ENCODE measurements at regions of chr19 and their contacts with region 1.

Region 1: DNA sequence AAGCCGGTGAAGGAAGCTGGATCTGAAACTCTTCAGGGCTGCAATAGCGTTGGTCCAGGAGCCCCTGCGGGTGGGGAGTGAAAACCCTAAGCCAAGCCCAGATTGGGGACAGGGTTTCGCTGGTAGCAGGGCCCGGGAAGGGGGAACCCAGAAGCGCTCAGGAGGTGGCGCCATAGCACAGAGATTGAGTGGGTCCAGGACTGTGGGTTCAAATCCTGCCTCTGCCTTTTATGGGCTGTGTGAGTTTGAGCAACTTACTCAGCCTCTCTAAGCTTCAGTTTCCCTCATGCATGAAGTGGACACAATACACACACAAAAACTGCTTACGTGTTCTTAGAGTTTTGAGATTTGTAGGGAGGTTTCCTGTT is 8.3 kb upstream of the SYCN start:
- DNase-seq: peak in 8 of 9 donors; percentile 24 to 58 (median 46)
- ATAC-seq: peak; percentile 80
- H3K4me3 ChIP-seq: no peak overlapping the region
- H3K4me3 Mint-ChIP-seq: no peak overlapping the region
- H3K27ac ChIP-seq: no peak overlapping the region
- H3K27ac Mint-ChIP-seq: no peak overlapping the region
- H3K4me1 ChIP-seq: no peaks in the 10 kb centered on the region
- H3K4me1 Mint-ChIP-seq: no peaks in the 10 kb centered on the region
- H3K27me3 ChIP-seq: no peaks in the 10 kb centered on the region
- H3K27me3 Mint-ChIP-seq: peaks cover 0 to 13% (median 5%) of the 10 kb centered on the region in 5 donors

Region 2: GRCh38 chr19:38891771-38892170 is 320.6 kb before region 1 on chr19:
- CTCF ChIA-PET with region 1: no interaction called
- POLR2A ChIA-PET with region 1: no interaction called
- intact Hi-C with region 1: no loop called
- DNase-seq: no peak
- ATAC-seq: no peak
- H3K4me3 ChIP-seq: no peak overlapping the region
- H3K4me3 Mint-ChIP-seq: no peak overlapping the region
- H3K27ac ChIP-seq: no peak overlapping the region
- H3K27ac Mint-ChIP-seq: no peak overlapping the region
- H3K4me1 ChIP-seq: peaks cover 0 to 3% of the 10 kb centered on the region in 2 donors
- H3K4me1 Mint-ChIP-seq: peaks cover 0 to 17% (median 8%) of the 10 kb centered on the region in 7 donors
- H3K27me3 ChIP-seq: no peaks in the 10 kb centered on the region
- H3K27me3 Mint-ChIP-seq: no peaks in the 10 kb centered on the region

Region 3: GRCh38 chr19:39166571-39167391 is 45.6 kb before region 1 on chr19:
- CTCF ChIA-PET with region 1: no interaction called
- POLR2A ChIA-PET with region 1: no interaction called
- intact Hi-C with region 1: no loop called
- DNase-seq: no peak
- ATAC-seq: no peak
- H3K4me3 ChIP-seq: no peak overlapping the region
- H3K4me3 Mint-ChIP-seq: no peak overlapping the region
- H3K27ac ChIP-seq: no peak overlapping the region
- H3K27ac Mint-ChIP-seq: no peak overlapping the region
- H3K4me1 ChIP-seq: no peaks in the 10 kb centered on the region
- H3K4me1 Mint-ChIP-seq: peaks cover 0 to 15% (median 0%) of the 10 kb centered on the region in 7 donors
- H3K27me3 ChIP-seq: no peaks in the 10 kb centered on the region
- H3K27me3 Mint-ChIP-seq: no peaks in the 10 kb centered on the region

Region 4: DNA sequence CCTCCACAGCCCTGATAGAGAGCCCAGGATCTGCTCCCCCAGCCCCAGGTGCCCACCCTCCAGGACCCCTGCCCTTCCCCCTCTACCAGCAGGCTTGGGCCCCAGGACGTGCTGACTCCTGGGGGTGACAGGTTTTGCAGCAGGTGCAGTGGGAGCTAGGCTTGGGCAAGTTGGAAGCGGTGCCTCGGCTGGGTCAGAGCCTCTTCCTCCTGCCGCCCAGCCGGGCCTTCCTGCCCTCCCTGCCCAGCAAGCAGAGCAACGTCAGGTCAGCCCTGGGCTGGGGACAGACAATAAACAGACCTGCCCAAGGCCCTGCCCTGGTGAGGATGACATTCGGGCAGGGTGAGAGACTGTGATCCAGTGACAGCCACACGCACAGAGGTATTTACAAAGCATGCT is 24.8 kb before region 1 on chr19:
- CTCF ChIA-PET with region 1: no interaction called
- POLR2A ChIA-PET with region 1: no interaction called
- intact Hi-C with region 1: no loop called
- DNase-seq: no peak
- ATAC-seq: no peak
- H3K4me3 ChIP-seq: no peak overlapping the region
- H3K4me3 Mint-ChIP-seq: no peak overlapping the region
- H3K27ac ChIP-seq: no peak overlapping the region
- H3K27ac Mint-ChIP-seq: peak overlapping the region in 2 of 9 donors; percentile 7 to 42
- H3K4me1 ChIP-seq: no peaks in the 10 kb centered on the region
- H3K4me1 Mint-ChIP-seq: peaks cover 0 to 4% (median 0%) of the 10 kb centered on the region in 7 donors
- H3K27me3 ChIP-seq: no peaks in the 10 kb centered on the region
- H3K27me3 Mint-ChIP-seq: peaks cover 5 to 31% (median 10%) of the 10 kb centered on the region in 5 donors

Region 5: GRCh38 chr19:39328046-39328705 is 115.8 kb after region 1 on chr19:
- CTCF ChIA-PET with region 1: interaction called, 3 read pairs
- POLR2A ChIA-PET with region 1: interaction called, 4 read pairs
- intact Hi-C with region 1: loop called (anchors 1 kb)
- DNase-seq: peak; percentile 59 to 86 (median 71)
- ATAC-seq: peak; percentile 92
- H3K4me3 ChIP-seq: no peak overlapping the region
- H3K4me3 Mint-ChIP-seq: peak overlapping the region in 9 of 10 donors; percentile 42 to 75 (median 54)
- H3K27ac ChIP-seq: peak overlapping the region; percentile 60
- H3K27ac Mint-ChIP-seq: peak overlapping the region; percentile 71 to 91 (median 80)
- H3K4me1 ChIP-seq: peaks cover 17 to 42% of the 10 kb centered on the region in 2 donors
- H3K4me1 Mint-ChIP-seq: peaks cover 31 to 66% (median 45%) of the 10 kb centered on the region in 7 donors
- H3K27me3 ChIP-seq: no peaks in the 10 kb centered on the region
- H3K27me3 Mint-ChIP-seq: no peaks in the 10 kb centered on the region

Region 6: GRCh38 chr19:39465956-39466747 is 253.8 kb after region 1 on chr19:
- CTCF ChIA-PET with region 1: no interaction called
- POLR2A ChIA-PET with region 1: no interaction called
- intact Hi-C with region 1: no loop called
- DNase-seq: no peak
- ATAC-seq: no peak
- H3K4me3 ChIP-seq: no peak overlapping the region
- H3K4me3 Mint-ChIP-seq: no peak overlapping the region
- H3K27ac ChIP-seq: no peak overlapping the region
- H3K27ac Mint-ChIP-seq: peak overlapping the region in 4 of 9 donors; percentile 8 to 78 (median 24)
- H3K4me1 ChIP-seq: no peaks in the 10 kb centered on the region
- H3K4me1 Mint-ChIP-seq: peaks cover 0 to 10% (median 2%) of the 10 kb centered on the region in 7 donors
- H3K27me3 ChIP-seq: no peaks in the 10 kb centered on the region
- H3K27me3 Mint-ChIP-seq: no peaks in the 10 kb centered on the region

Measured in naive thymus-derived CD4-positive, alpha-beta T cell (primary cell).